Activated T-helper 2 cell treated with anti-CD3 and anti-CD28 coated beads, Interferon-gamma antibody, Interleukin-2, Interleukin-4, amounts not matched to agents 10 μg/mL and 5 μg/mL and 100 μg/mL, durations not matched to agents 14 hours and 24 hours and 36 hours (primary cell): ENCODE measurements at regions of chr4 and their contacts with region 1.

Region 1: DNA sequence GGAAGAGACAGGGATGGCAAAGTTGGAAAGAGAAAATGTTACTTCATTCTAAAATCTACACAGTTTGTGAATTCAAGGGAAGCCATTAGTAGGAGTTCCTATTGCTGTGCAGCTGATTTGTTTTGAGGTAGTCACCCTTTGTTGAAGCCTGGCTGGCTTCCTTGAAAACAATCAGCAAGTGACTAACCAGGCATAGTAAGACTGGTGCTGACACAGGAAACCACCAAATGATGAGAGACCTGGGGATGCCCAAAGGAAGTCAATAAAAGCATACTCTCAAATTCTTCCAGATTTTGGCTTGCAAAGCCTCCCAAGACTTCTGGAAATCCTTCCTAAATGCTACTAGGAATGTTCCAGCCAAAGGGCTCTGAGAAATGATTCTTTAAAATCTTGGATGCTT is 23.9 kb upstream of the PRDM8 start:
- DNase-seq: peak; percentile 53
- H3K4me3 Mint-ChIP-seq: peak overlapping the region; percentile 37
- H3K27ac Mint-ChIP-seq: peak overlapping the region; percentile 89
- H3K4me1 Mint-ChIP-seq: peaks cover 47% of the 10 kb centered on the region
- H3K27me3 Mint-ChIP-seq: no peaks in the 10 kb centered on the region

Region 2: DNA sequence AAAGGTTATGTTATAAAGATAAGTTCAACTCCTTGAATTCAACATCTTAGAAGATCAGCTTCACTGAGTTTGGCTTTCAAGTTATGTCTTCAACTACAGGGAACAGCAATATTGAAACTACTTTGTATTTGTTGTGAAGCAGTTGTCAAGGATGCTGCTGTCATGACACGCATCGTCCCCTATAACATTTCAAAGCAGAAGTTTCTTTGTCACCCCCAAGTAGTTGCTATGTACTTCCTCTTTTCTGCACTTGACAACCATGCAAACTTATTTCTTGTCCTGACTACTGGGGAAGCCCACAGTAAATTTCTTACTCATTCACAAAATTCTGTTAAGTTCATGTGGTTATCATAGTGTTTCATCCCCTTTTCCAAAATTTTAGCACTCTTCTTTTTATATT is 114.7 kb before region 1 on chr4:
- intact Hi-C with region 1: loop called (anchors 2 kb)
- DNase-seq: peak; percentile 41
- H3K4me3 Mint-ChIP-seq: peak overlapping the region; percentile 72
- H3K27ac Mint-ChIP-seq: peak overlapping the region; percentile 94
- H3K4me1 Mint-ChIP-seq: peaks cover 42% of the 10 kb centered on the region
- H3K27me3 Mint-ChIP-seq: no peaks in the 10 kb centered on the region

Region 3: GRCh38 chr4:80138551-80139538 is 34.6 kb before region 1 on chr4:
- intact Hi-C with region 1: loop called (anchors 1 kb)
- DNase-seq: peak; percentile 54
- H3K4me3 Mint-ChIP-seq: peak overlapping the region; percentile 2
- H3K27ac Mint-ChIP-seq: peak overlapping the region; percentile 83
- H3K4me1 Mint-ChIP-seq: peaks cover 62% of the 10 kb centered on the region
- H3K27me3 Mint-ChIP-seq: no peaks in the 10 kb centered on the region

Region 4: DNA sequence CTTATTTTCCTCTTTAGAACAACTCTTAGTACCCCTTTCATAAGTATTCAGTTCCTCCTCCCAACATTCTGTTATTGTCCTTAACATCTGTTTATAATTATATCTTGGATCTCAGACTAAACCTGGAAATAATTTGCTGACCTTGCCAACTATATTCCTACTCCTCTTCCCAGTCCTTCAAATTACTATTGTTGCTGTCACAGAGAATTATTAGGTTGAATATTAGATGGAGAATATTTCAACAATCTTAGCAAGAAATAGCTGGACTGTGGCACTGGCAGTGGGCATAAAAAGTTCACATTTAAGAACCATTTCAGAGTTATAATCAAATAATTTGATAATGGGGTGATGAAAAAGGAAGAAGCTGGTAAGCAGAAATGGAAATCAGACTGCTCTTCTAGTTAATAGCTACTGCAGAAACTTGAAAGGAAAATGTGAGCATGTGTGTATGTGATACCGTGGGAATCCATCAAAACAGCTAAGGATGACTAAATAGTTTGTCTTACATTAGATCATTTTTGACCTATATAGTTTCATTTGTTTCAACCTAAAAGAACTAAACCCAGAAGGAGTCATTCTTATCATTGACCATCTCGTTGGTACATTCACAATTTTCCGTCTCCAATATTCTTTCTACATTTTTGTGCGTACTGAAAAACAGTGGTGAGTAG is 19.4 kb before region 1 on chr4:
- intact Hi-C with region 1: loop called (anchors 1 kb)
- DNase-seq: no peak
- H3K4me3 Mint-ChIP-seq: peak overlapping the region; percentile 59
- H3K27ac Mint-ChIP-seq: peak overlapping the region; percentile 97
- H3K4me1 Mint-ChIP-seq: peaks cover 18% of the 10 kb centered on the region
- H3K27me3 Mint-ChIP-seq: peaks cover 3% of the 10 kb centered on the region